PC-9 (cell line): ENCODE measurements at regions of chr5 and their contacts with region 1.

Region 1: DNA sequence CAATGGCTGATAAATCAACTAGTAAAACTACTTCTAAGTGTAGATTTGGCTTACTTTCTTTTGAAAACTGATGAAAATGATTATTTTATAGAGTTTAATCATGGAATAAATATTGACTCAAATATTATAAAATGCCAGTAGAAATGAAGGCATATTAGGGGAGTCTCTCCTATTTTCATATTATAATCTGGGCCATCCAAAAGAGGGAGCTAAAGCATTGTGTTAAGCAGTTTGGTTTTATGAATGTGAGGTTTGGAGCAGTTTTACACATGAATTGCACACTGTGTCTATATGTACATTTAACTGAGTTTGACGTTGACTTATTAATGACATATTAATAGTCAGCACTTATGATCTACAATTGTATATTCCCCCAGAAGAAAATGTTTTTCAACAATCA is 17.4 kb downstream of the CDH9 start:
- DNase-seq: no peak
- H3K4me3 ChIP-seq: no peak overlapping the region
- H3K27ac ChIP-seq: no peak overlapping the region
- H3K4me1 ChIP-seq: no peaks in the 10 kb centered on the region
- H3K27me3 ChIP-seq: no peaks in the 10 kb centered on the region
- CTCF ChIP-seq: peak; percentile 51

Region 2: DNA sequence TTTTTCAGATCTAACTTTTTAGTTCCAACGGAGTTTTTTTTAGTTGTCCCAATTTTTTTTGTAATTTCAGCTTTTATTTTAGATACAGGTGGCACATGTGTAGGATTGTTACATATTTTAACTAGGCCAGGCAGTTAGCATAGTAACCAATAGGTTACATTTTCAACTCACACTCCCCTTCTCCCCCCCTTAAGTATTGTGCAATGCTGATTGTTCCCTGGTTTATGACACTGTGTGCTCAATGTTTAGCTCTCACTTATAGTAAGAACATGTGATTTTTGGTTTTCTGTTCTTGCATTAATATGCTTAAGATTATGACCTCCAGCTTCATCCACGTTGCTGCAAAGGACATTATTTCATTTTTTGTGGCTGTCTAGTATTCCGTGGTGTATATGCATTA is 485.8 kb before region 1 on chr5:
- CTCF ChIA-PET with region 1: no interaction called
- POLR2A ChIA-PET with region 1: no interaction called
- intact Hi-C with region 1: no loop called
- DNase-seq: no peak
- H3K4me3 ChIP-seq: no peak overlapping the region
- H3K27ac ChIP-seq: no peak overlapping the region
- H3K4me1 ChIP-seq: no peaks in the 10 kb centered on the region
- H3K27me3 ChIP-seq: no peaks in the 10 kb centered on the region
- CTCF ChIP-seq: no peak

Region 3: GRCh38 chr5:27062451-27062850 is 41.5 kb after region 1 on chr5:
- CTCF ChIA-PET with region 1: no interaction called
- POLR2A ChIA-PET with region 1: no interaction called
- intact Hi-C with region 1: no loop called
- DNase-seq: no peak
- H3K4me3 ChIP-seq: no peak overlapping the region
- H3K27ac ChIP-seq: no peak overlapping the region
- H3K4me1 ChIP-seq: no peaks in the 10 kb centered on the region
- H3K27me3 ChIP-seq: no peaks in the 10 kb centered on the region
- CTCF ChIP-seq: no peak

Region 4: DNA sequence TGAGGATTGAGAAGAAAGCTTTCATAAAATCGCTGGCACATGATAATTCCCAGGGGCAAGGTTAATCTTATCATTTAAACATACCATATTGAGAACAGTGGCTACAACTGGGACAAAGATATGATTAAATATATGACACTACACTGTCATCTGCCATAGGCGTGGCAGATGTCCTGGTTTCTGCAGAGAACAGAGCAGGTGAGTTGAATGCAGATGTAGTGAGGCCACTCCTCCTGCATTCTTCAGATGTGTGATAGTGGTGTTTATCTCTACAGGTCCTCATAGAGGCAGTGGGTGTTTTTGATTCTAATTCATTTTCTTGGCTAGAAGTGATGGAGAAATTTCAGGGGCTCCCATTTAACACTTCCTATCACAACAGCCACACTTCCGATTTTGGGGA is 254.4 kb after region 1 on chr5:
- CTCF ChIA-PET with region 1: no interaction called
- POLR2A ChIA-PET with region 1: no interaction called
- intact Hi-C with region 1: no loop called
- DNase-seq: no peak
- H3K4me3 ChIP-seq: no peak overlapping the region
- H3K27ac ChIP-seq: no peak overlapping the region
- H3K4me1 ChIP-seq: no peaks in the 10 kb centered on the region
- H3K27me3 ChIP-seq: no peaks in the 10 kb centered on the region
- CTCF ChIP-seq: no peak

Region 5: GRCh38 chr5:27450607-27451006 is 429.6 kb after region 1 on chr5:
- CTCF ChIA-PET with region 1: no interaction called
- POLR2A ChIA-PET with region 1: no interaction called
- intact Hi-C with region 1: no loop called
- DNase-seq: no peak
- H3K4me3 ChIP-seq: no peak overlapping the region
- H3K27ac ChIP-seq: no peak overlapping the region
- H3K4me1 ChIP-seq: no peaks in the 10 kb centered on the region
- H3K27me3 ChIP-seq: no peaks in the 10 kb centered on the region
- CTCF ChIP-seq: no peak

Region 6: GRCh38 chr5:27818888-27819287 is 797.9 kb after region 1 on chr5:
- CTCF ChIA-PET with region 1: no interaction called
- POLR2A ChIA-PET with region 1: interaction called, 19 read pairs
- intact Hi-C with region 1: no loop called
- DNase-seq: no peak
- H3K4me3 ChIP-seq: no peak overlapping the region
- H3K27ac ChIP-seq: no peak overlapping the region
- H3K4me1 ChIP-seq: no peaks in the 10 kb centered on the region
- H3K27me3 ChIP-seq: no peaks in the 10 kb centered on the region
- CTCF ChIP-seq: no peak